ENCODE measurements at regions of chr1 and their contacts with region 1.

Region 1: DNA sequence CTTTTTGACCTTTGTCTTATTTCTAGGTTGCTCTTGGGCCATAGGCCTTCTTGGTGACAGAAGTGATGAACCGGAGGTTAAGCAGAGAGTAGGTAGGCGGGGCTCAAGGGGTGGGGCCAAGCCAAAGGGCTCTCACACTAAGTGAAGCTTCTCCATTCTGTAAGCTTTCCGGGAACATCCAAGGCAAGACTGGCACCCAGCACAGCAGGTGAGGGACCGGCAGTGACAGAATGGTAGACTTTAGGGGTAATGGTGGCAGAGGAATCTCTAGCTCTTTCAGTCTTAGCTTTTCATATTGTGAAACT is at the start of gene TNFAIP8L2:
- DNase-seq: peak; percentile 93
- ATAC-seq: peak; percentile 82
- H3K4me3 Mint-ChIP-seq: peak within 1 kb of the TSS; percentile 97
- H3K27ac Mint-ChIP-seq: peak within 1 kb of the TSS; percentile 98
- H3K4me1 Mint-ChIP-seq: peaks cover 41% of the 10 kb centered on the region
- H3K27me3 Mint-ChIP-seq: no peaks in the 10 kb centered on the region
- CTCF ChIP-seq: no peak
- total RNA-seq, gene TNFAIP8L2: 16.1 to 17.5 TPM

Region 2: GRCh38 chr1:151024540-151025146 is 131.8 kb before region 1 on chr1:
- CTCF ChIA-PET with region 1: interaction called, 40 read pairs
- POLR2A ChIA-PET with region 1: no interaction called
- intact Hi-C with region 1: no loop called
- DNase-seq: peak; percentile 94
- ATAC-seq: peak; percentile 99
- H3K4me3 Mint-ChIP-seq: peak overlapping the region; percentile 31
- H3K27ac Mint-ChIP-seq: peak overlapping the region; percentile 3
- H3K4me1 Mint-ChIP-seq: peaks cover 4% of the 10 kb centered on the region
- H3K27me3 Mint-ChIP-seq: no peaks in the 10 kb centered on the region
- CTCF ChIP-seq: peak; percentile 82

Region 3: DNA sequence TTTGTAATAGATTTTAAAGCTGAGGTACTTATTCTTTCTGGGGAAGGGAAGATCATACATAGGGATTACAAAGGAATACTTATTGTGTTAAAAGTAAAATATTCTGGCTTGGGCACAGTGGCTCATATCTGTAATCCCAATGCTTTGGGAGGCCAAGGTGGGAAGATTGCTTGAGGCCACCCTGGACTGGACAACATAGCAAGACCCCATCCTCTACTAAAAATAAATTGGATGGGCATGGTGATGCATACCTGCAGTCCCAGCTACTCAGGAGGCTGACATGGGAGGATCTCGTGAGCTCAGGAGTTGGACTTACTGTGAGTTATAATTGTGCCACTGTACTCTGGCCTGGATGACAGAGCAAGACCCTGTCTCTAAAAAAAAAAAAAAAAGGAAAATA is 58.3 kb before region 1 on chr1:
- CTCF ChIA-PET with region 1: interaction called, 298 read pairs
- POLR2A ChIA-PET with region 1: interaction called, 5 read pairs
- intact Hi-C with region 1: loop called (anchors 1 kb)
- DNase-seq: no peak
- ATAC-seq: no peak
- H3K4me3 Mint-ChIP-seq: no peak overlapping the region
- H3K27ac Mint-ChIP-seq: no peak overlapping the region
- H3K4me1 Mint-ChIP-seq: no peaks in the 10 kb centered on the region
- H3K27me3 Mint-ChIP-seq: no peaks in the 10 kb centered on the region
- CTCF ChIP-seq: no peak

Region 4: DNA sequence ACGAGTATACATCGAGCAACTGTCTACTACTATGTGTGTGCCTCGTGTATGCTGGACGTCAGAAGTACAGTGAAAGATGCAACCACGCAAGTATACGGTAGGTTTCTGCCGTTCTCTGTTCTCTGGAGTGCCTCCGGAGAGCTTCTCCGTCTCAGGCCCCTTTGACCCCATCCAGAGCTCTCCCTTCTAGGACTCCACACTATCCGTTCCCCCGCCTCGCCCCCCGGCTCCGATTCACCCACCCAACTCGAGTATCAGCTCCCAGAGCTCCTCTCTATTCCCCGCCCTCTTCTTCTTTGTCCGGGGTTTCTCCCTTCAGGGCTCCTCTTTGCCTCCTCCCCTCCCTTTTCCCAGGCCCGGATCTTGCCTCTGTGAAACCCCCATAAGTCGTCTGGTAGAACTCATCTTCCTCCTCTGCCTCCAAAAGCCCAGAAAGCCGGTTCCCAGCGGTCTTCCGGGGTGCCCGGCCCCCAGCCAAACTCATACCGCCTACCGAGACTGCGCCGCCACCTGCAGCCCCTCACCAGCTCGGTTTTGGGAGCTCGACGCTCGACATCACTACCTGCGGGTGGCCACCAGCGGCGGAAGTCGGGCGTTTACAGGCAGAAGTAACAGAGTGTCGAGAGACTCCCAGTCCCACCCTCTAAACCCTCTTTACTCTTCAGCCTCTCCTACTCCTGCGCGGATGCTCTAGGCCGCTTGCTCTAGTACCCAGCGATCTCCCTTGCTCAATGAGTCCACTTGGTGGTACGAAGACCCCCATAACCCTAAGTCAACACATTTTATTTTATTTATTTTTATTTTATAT is 33.4 kb after region 1 on chr1 and contains the start of gene VPS72:
- CTCF ChIA-PET with region 1: interaction called, 13 read pairs
- POLR2A ChIA-PET with region 1: interaction called, 9 read pairs
- intact Hi-C with region 1: no loop called
- DNase-seq: peak; percentile 93
- ATAC-seq: peak; percentile 94
- H3K4me3 Mint-ChIP-seq: peak within 1 kb of the TSS; percentile 94
- H3K27ac Mint-ChIP-seq: peak within 1 kb of the TSS; percentile 96
- H3K4me1 Mint-ChIP-seq: peaks cover 20% of the 10 kb centered on the region
- H3K27me3 Mint-ChIP-seq: no peaks in the 10 kb centered on the region
- CTCF ChIP-seq: no peak
- total RNA-seq, gene VPS72: 47.4 to 61.0 TPM

Region 5: GRCh38 chr1:151292207-151293030 is 136.0 kb after region 1 on chr1:
- CTCF ChIA-PET with region 1: no interaction called
- POLR2A ChIA-PET with region 1: no interaction called
- intact Hi-C with region 1: no loop called
- DNase-seq: peak; percentile 30
- ATAC-seq: peak; percentile 52
- H3K4me3 Mint-ChIP-seq: no peak overlapping the region
- H3K27ac Mint-ChIP-seq: peak overlapping the region; percentile 71
- H3K4me1 Mint-ChIP-seq: peaks cover 2% of the 10 kb centered on the region
- H3K27me3 Mint-ChIP-seq: no peaks in the 10 kb centered on the region
- CTCF ChIP-seq: peak; percentile 27

Region 6: DNA sequence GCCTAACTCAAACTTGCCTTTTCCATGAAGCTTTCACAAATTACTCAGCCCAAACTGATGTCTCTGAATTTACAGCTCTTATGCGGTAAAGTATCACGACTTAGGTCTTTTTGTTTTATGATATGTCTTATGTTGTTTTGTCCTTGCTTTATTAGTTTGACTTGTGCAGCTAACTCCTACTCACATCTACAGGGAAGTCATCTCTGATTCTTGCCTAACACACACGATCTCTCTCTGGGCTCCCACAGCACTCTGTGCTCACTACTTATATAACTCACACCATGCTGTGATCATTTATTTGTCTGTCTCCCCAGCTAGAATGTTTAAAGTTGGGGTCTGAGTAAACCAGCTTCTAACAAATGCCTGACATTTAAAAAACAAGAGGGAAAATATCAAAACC is 180.1 kb after region 1 on chr1:
- CTCF ChIA-PET with region 1: no interaction called
- POLR2A ChIA-PET with region 1: no interaction called
- intact Hi-C with region 1: no loop called
- DNase-seq: no peak
- ATAC-seq: no peak
- H3K4me3 Mint-ChIP-seq: no peak overlapping the region
- H3K27ac Mint-ChIP-seq: no peak overlapping the region
- H3K4me1 Mint-ChIP-seq: peaks cover 10% of the 10 kb centered on the region
- H3K27me3 Mint-ChIP-seq: no peaks in the 10 kb centered on the region
- CTCF ChIP-seq: no peak

Measured in activated CD8-positive, alpha-beta T cell treated with anti-CD3 and anti-CD28 coated beads for 36 hours (primary cell).